CD4-positive, alpha-beta T cell (primary cell): ENCODE measurements at regions of chr12 and their contacts with region 1.

Region 1: GRCh38 chr12:32755654-32756475 is at the start of gene YARS2:
- DNase-seq: peak; percentile 75 to 97 (median 84)
- ATAC-seq: peak; percentile 81
- H3K4me3 ChIP-seq: peak within 1 kb of the TSS; percentile 90
- H3K4me3 Mint-ChIP-seq: peak within 1 kb of the TSS; percentile 91
- H3K27ac ChIP-seq: peak within 1 kb of the TSS; percentile 69 to 88
- H3K27ac Mint-ChIP-seq: peak within 1 kb of the TSS; percentile 89
- H3K4me1 ChIP-seq: peaks cover 20% of the 10 kb centered on the region
- H3K4me1 Mint-ChIP-seq: peaks cover 22% of the 10 kb centered on the region
- H3K27me3 ChIP-seq: no peaks in the 10 kb centered on the region
- H3K27me3 Mint-ChIP-seq: no peaks in the 10 kb centered on the region
- CTCF ChIP-seq: peak; percentile 92
- total RNA-seq, gene YARS2: 12.0 to 13.0 TPM

Region 2: GRCh38 chr12:30764251-30764650 is 1991.6 kb before region 1 on chr12:
- CTCF ChIA-PET with region 1: no interaction called
- POLR2A ChIA-PET with region 1: no interaction called
- intact Hi-C with region 1: loop called in 1 of 2 experiments (anchors 10 kb)
- DNase-seq: no peak
- ATAC-seq: no peak
- H3K4me3 ChIP-seq: no peak overlapping the region
- H3K4me3 Mint-ChIP-seq: no peak overlapping the region
- H3K27ac ChIP-seq: no peak overlapping the region
- H3K27ac Mint-ChIP-seq: no peak overlapping the region
- H3K4me1 ChIP-seq: no peaks in the 10 kb centered on the region
- H3K4me1 Mint-ChIP-seq: no peaks in the 10 kb centered on the region
- H3K27me3 ChIP-seq: peaks cover 0 to 2% of the 10 kb centered on the region in 2 experiments
- H3K27me3 Mint-ChIP-seq: no peaks in the 10 kb centered on the region
- CTCF ChIP-seq: no peak

Region 3: GRCh38 chr12:31650927-31651326 is 1104.9 kb before region 1 on chr12:
- CTCF ChIA-PET with region 1: interaction called, 11 read pairs
- POLR2A ChIA-PET with region 1: interaction called, 9 read pairs
- intact Hi-C with region 1: loop called (anchors 5 to 10 kb)
- DNase-seq: no peak
- ATAC-seq: no peak
- H3K4me3 ChIP-seq: no peak overlapping the region
- H3K4me3 Mint-ChIP-seq: no peak overlapping the region
- H3K27ac ChIP-seq: no peak overlapping the region
- H3K27ac Mint-ChIP-seq: no peak overlapping the region
- H3K4me1 ChIP-seq: peaks cover 10% of the 10 kb centered on the region
- H3K4me1 Mint-ChIP-seq: peaks cover 7% of the 10 kb centered on the region
- H3K27me3 ChIP-seq: no peaks in the 10 kb centered on the region
- H3K27me3 Mint-ChIP-seq: no peaks in the 10 kb centered on the region
- CTCF ChIP-seq: no peak

Region 4: GRCh38 chr12:32455607-32456071 is 300.2 kb before region 1 on chr12:
- CTCF ChIA-PET with region 1: interaction called, 3 read pairs
- POLR2A ChIA-PET with region 1: interaction called, 6 read pairs
- intact Hi-C with region 1: loop called in 1 of 2 experiments (anchors 5 kb)
- DNase-seq: peak in 4 of 14 experiments; percentile 9 to 59 (median 54)
- ATAC-seq: no peak
- H3K4me3 ChIP-seq: no peak overlapping the region
- H3K4me3 Mint-ChIP-seq: no peak overlapping the region
- H3K27ac ChIP-seq: no peak overlapping the region
- H3K27ac Mint-ChIP-seq: no peak overlapping the region
- H3K4me1 ChIP-seq: no peaks in the 10 kb centered on the region
- H3K4me1 Mint-ChIP-seq: no peaks in the 10 kb centered on the region
- H3K27me3 ChIP-seq: peaks cover 0 to 5% of the 10 kb centered on the region in 2 experiments
- H3K27me3 Mint-ChIP-seq: no peaks in the 10 kb centered on the region
- CTCF ChIP-seq: peak; percentile 68

Region 5: DNA sequence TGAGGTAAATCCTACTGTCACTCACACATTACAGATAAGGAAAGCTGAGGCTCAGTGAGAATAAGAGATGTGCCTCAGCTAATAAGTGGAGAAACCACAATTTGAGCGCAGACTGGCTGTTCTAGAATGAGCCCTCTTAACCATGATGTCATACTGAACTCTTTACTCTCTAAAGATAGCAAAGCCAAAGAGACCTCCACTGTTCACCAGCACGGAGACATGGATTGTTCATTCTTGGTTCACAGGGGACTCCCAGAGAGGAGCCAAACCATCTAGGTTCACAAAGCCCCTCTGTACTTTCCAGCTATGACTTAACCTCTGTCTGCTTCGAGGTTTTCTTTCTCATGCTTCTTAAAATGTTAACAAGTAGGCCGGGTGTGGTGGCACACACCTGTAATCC is 32.5 kb after region 1 on chr12:
- CTCF ChIA-PET with region 1: no interaction called
- POLR2A ChIA-PET with region 1: no interaction called
- intact Hi-C with region 1: no loop called
- DNase-seq: no peak
- ATAC-seq: no peak
- H3K4me3 ChIP-seq: no peak overlapping the region
- H3K4me3 Mint-ChIP-seq: no peak overlapping the region
- H3K27ac ChIP-seq: no peak overlapping the region
- H3K27ac Mint-ChIP-seq: no peak overlapping the region
- H3K4me1 ChIP-seq: no peaks in the 10 kb centered on the region
- H3K4me1 Mint-ChIP-seq: no peaks in the 10 kb centered on the region
- H3K27me3 ChIP-seq: no peaks in the 10 kb centered on the region
- H3K27me3 Mint-ChIP-seq: no peaks in the 10 kb centered on the region
- CTCF ChIP-seq: no peak

Region 6: GRCh38 chr12:32918890-32919801 is 163.3 kb after region 1 on chr12:
- CTCF ChIA-PET with region 1: no interaction called
- POLR2A ChIA-PET with region 1: no interaction called
- intact Hi-C with region 1: loop called (anchors 1 to 5 kb)
- DNase-seq: peak in 2 of 14 experiments; percentile 11 to 13
- ATAC-seq: no peak
- H3K4me3 ChIP-seq: no peak overlapping the region
- H3K4me3 Mint-ChIP-seq: no peak overlapping the region
- H3K27ac ChIP-seq: no peak overlapping the region
- H3K27ac Mint-ChIP-seq: no peak overlapping the region
- H3K4me1 ChIP-seq: no peaks in the 10 kb centered on the region
- H3K4me1 Mint-ChIP-seq: no peaks in the 10 kb centered on the region
- H3K27me3 ChIP-seq: no peaks in the 10 kb centered on the region
- H3K27me3 Mint-ChIP-seq: peaks cover 27% of the 10 kb centered on the region
- CTCF ChIP-seq: peak; percentile 20

Region 7: GRCh38 chr12:33277386-33277785 is 521.5 kb after region 1 on chr12:
- CTCF ChIA-PET with region 1: no interaction called
- POLR2A ChIA-PET with region 1: no interaction called
- intact Hi-C with region 1: no loop called
- DNase-seq: no peak
- ATAC-seq: no peak
- H3K4me3 ChIP-seq: no peak overlapping the region
- H3K4me3 Mint-ChIP-seq: no peak overlapping the region
- H3K27ac ChIP-seq: no peak overlapping the region
- H3K27ac Mint-ChIP-seq: no peak overlapping the region
- H3K4me1 ChIP-seq: no peaks in the 10 kb centered on the region
- H3K4me1 Mint-ChIP-seq: no peaks in the 10 kb centered on the region
- H3K27me3 ChIP-seq: no peaks in the 10 kb centered on the region
- H3K27me3 Mint-ChIP-seq: no peaks in the 10 kb centered on the region
- CTCF ChIP-seq: no peak

Region 8: GRCh38 chr12:34218165-34219045 is 1462.5 kb after region 1 on chr12:
- CTCF ChIA-PET with region 1: no interaction called
- POLR2A ChIA-PET with region 1: no interaction called
- intact Hi-C with region 1: loop called (anchors 2 kb)
- DNase-seq: peak; percentile 27 to 80 (median 54)
- ATAC-seq: peak; percentile 83
- H3K4me3 ChIP-seq: peak overlapping the region; percentile 62
- H3K4me3 Mint-ChIP-seq: peak overlapping the region; percentile 91
- H3K27ac ChIP-seq: no peak overlapping the region
- H3K27ac Mint-ChIP-seq: no peak overlapping the region
- H3K4me1 ChIP-seq: peaks cover 14% of the 10 kb centered on the region
- H3K4me1 Mint-ChIP-seq: peaks cover 7% of the 10 kb centered on the region
- H3K27me3 ChIP-seq: peaks cover 3 to 5% of the 10 kb centered on the region in 2 experiments
- H3K27me3 Mint-ChIP-seq: peaks cover 15% of the 10 kb centered on the region
- CTCF ChIP-seq: peak; percentile 89